ENCODE measurements at regions of chr14 and their contacts with region 1.

Region 1: GRCh38 chr14:76918751-76919543 is 92.7 kb downstream of the LRRC74A start:
- H3K4me3 ChIP-seq: no peak overlapping the region
- H3K27ac ChIP-seq: peak overlapping the region; percentile 95
- H3K4me1 ChIP-seq: peaks cover 32% of the 10 kb centered on the region
- CTCF ChIP-seq: peak; percentile 22; the same call in 1 of the 2 replicates

Region 2: DNA sequence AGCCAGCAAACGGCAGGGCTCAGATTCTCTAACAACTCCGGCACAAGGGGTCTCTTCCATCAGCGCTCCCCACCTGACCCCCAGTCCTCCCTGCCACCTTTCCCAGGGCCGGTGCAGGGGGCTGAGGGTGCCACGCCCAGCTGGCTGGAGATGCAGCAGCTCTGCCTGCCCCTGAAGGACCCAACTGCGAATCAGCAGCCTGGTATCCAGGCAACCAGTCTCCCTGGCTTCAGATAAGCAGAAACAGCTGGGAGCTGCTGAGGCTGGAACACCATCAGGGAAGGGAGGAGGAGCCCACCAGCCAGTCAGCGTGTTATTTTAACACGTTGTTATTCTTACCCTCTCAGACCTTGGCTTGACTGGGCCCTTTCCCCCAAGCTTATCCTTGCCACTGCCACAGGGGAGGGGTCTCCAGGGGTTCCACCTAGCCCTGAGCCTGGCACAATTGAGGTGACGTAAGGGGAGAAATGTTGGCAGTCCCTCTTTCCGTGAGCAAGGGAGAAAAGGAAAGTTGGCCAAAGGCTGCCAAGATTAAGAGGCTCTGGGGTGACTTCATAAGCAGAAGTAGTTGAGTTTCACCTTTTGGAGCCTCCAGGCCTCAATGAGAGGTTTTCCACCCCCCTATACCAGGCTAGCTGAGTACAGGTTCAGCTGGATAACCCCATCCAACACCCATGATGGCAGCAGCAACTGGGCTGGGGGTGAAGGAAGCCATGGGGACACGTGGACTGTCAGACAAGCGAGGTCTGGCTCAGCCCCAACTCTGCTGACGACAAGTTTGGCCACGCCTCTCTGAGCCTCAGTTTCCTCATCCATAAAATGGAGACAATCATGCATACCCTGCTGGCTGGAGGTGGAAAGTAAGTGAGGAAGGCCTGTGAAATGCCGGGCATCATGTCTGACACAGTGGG is 18.5 kb after region 1 on chr14:
- CTCF ChIA-PET with region 1: interaction called, 20 read pairs
- POLR2A ChIA-PET with region 1: no interaction called
- H3K4me3 ChIP-seq: no peak overlapping the region
- H3K27ac ChIP-seq: no peak overlapping the region
- H3K4me1 ChIP-seq: peaks cover 3% of the 10 kb centered on the region
- CTCF ChIP-seq: no peak

Region 3: GRCh38 chr14:76956316-76957090 is 37.6 kb after region 1 on chr14:
- CTCF ChIA-PET with region 1: interaction called, 28 read pairs
- POLR2A ChIA-PET with region 1: no interaction called
- H3K4me3 ChIP-seq: peak overlapping the region; percentile 30
- H3K27ac ChIP-seq: peak overlapping the region; percentile 95
- H3K4me1 ChIP-seq: peaks cover 24% of the 10 kb centered on the region
- CTCF ChIP-seq: peak; percentile 47; the same call in 1 of the 2 replicates

Region 4: DNA sequence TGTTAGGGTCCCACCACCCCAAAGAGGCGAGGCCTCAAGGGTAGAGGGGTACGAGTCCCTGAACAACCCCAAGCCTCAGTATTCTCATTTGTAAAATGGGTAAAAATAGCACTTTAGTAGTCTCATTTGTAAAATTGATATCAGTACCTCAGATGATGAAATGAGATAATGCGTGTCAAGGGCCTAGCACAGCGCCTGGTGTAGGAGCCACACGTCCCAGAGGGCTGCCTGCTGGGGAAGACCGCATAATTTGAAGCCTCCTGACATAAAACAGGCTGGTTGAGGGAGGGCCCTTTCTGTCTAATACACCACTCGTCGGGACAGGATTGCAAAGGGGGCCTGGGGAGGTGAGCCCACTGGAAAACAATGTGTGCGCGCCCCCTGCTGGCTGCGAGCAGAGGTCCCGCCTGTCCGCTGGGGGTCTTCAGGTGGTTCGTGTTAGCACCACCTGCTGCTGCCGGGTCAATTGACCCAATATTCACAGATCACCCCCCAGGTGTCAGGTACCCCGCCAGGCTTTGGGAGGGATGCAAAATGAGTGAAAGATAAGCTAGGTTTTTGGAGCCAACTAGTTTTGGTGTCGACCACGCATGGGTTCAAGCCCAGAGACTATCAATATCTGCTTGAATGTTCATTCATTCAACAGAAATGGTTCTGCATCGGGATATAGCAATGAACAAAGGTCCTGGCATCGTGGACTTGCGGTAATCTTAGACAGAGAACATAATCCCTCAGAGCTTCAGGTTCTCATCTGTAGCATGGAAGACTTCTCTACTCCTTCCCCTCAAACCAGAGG is 134.3 kb after region 1 on chr14:
- CTCF ChIA-PET with region 1: interaction called, 83 read pairs
- POLR2A ChIA-PET with region 1: interaction called, 3 read pairs
- H3K4me3 ChIP-seq: no peak overlapping the region
- H3K27ac ChIP-seq: peak overlapping the region; percentile 20; the same call in 1 of the 2 replicates
- H3K4me1 ChIP-seq: peaks cover 4% of the 10 kb centered on the region; the same call in 1 of the 2 replicates
- CTCF ChIP-seq: peak; percentile 87

Region 5: GRCh38 chr14:77067632-77068514 is 148.9 kb after region 1 on chr14:
- CTCF ChIA-PET with region 1: interaction called, 59 read pairs
- POLR2A ChIA-PET with region 1: no interaction called
- H3K4me3 ChIP-seq: no peak overlapping the region
- H3K27ac ChIP-seq: no peak overlapping the region
- H3K4me1 ChIP-seq: no peaks in the 10 kb centered on the region
- CTCF ChIP-seq: peak; percentile 76